ENCODE measurements at regions of chr3 and their contacts with region 1.

Region 1: GRCh38 chr3:150870396-150870795 is 34.8 kb downstream of the MINDY4B start:
- DNase-seq: no peak
- ATAC-seq: no peak
- H3K4me3 ChIP-seq: no peak overlapping the region
- H3K4me3 Mint-ChIP-seq: no peak overlapping the region
- H3K27ac ChIP-seq: no peak overlapping the region
- H3K27ac Mint-ChIP-seq: no peak overlapping the region
- H3K4me1 ChIP-seq: no peaks in the 10 kb centered on the region
- H3K4me1 Mint-ChIP-seq: peaks cover under 1% of the 10 kb centered on the region
- H3K27me3 ChIP-seq: no peaks in the 10 kb centered on the region
- H3K27me3 Mint-ChIP-seq: peaks cover 14% of the 10 kb centered on the region
- CTCF ChIP-seq: no peak

Region 2: GRCh38 chr3:150286390-150287147 is 583.8 kb before region 1 on chr3:
- CTCF ChIA-PET with region 1: no interaction called
- POLR2A ChIA-PET with region 1: no interaction called
- intact Hi-C with region 1: loop called in 1 of 2 experiments (anchors 10 kb)
- DNase-seq: peak in 4 of 9 experiments; percentile 8 to 68 (median 34)
- ATAC-seq: peak; percentile 83
- H3K4me3 ChIP-seq: no peak overlapping the region
- H3K4me3 Mint-ChIP-seq: no peak overlapping the region
- H3K27ac ChIP-seq: no peak overlapping the region
- H3K27ac Mint-ChIP-seq: no peak overlapping the region
- H3K4me1 ChIP-seq: no peaks in the 10 kb centered on the region
- H3K4me1 Mint-ChIP-seq: no peaks in the 10 kb centered on the region
- H3K27me3 ChIP-seq: peaks cover 2% of the 10 kb centered on the region in 2 experiments
- H3K27me3 Mint-ChIP-seq: peaks cover 13% of the 10 kb centered on the region
- CTCF ChIP-seq: peak; percentile 65

Region 3: GRCh38 chr3:150528354-150528797 is 342.0 kb before region 1 on chr3:
- CTCF ChIA-PET with region 1: interaction called, 3 read pairs
- POLR2A ChIA-PET with region 1: no interaction called
- intact Hi-C with region 1: loop called (anchors 1 to 2 kb)
- DNase-seq: peak in 2 of 9 experiments; percentile 45 to 50
- ATAC-seq: peak; percentile 54
- H3K4me3 ChIP-seq: no peak overlapping the region
- H3K4me3 Mint-ChIP-seq: no peak overlapping the region
- H3K27ac ChIP-seq: no peak overlapping the region
- H3K27ac Mint-ChIP-seq: no peak overlapping the region
- H3K4me1 ChIP-seq: no peaks in the 10 kb centered on the region
- H3K4me1 Mint-ChIP-seq: no peaks in the 10 kb centered on the region
- H3K27me3 ChIP-seq: no peaks in the 10 kb centered on the region
- H3K27me3 Mint-ChIP-seq: no peaks in the 10 kb centered on the region
- CTCF ChIP-seq: peak; percentile 67

Region 4: GRCh38 chr3:150603153-150603979 is 267.0 kb before region 1 on chr3 and contains the start of gene SELENOT:
- CTCF ChIA-PET with region 1: no interaction called
- POLR2A ChIA-PET with region 1: no interaction called
- intact Hi-C with region 1: loop called in 1 of 2 experiments (anchors 10 kb)
- DNase-seq: peak; percentile 88 to 98 (median 94)
- ATAC-seq: peak; percentile 81
- H3K4me3 ChIP-seq: peak within 1 kb of the TSS; percentile 79 to 86
- H3K4me3 Mint-ChIP-seq: peak within 1 kb of the TSS; percentile 99
- H3K27ac ChIP-seq: peak within 1 kb of the TSS; percentile 88 to 95
- H3K27ac Mint-ChIP-seq: peak within 1 kb of the TSS; percentile 100
- H3K4me1 ChIP-seq: peaks cover 43% of the 10 kb centered on the region
- H3K4me1 Mint-ChIP-seq: peaks cover 71% of the 10 kb centered on the region
- H3K27me3 ChIP-seq: no peaks in the 10 kb centered on the region
- H3K27me3 Mint-ChIP-seq: no peaks in the 10 kb centered on the region
- CTCF ChIP-seq: no peak
- total RNA-seq, gene SELENOT: 130 to 139 TPM

Region 5: DNA sequence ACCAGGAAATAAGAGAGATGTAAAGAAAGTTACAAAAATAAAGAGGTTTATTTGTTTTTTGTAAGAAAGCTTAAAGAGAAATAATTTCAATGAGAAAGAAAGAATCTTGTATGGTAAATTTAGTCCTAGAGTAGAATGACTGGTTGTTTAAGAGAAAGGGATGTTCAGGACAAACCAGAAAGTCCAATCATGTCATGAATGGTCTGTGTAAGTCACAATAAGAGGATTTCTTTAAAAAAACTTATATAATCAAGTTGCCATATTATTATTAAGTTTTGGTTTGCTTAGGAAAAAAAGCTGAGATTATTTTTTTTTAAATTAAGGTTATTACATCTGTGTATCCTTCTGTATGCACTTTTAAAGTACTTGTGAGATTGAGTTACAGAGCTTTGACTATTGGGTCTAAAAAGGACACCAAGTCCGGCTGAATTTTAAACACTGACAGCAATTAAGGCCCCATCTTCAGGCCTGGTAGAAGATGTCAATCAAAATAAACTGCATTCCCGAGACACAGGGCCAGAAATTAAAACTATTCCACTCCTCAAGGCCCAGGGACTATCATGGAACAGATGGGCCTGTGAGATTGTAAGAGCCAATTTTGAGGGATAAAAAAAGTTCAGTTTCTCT is 178.9 kb before region 1 on chr3:
- CTCF ChIA-PET with region 1: no interaction called
- POLR2A ChIA-PET with region 1: no interaction called
- intact Hi-C with region 1: no loop called
- DNase-seq: no peak
- ATAC-seq: no peak
- H3K4me3 ChIP-seq: no peak overlapping the region
- H3K4me3 Mint-ChIP-seq: no peak overlapping the region
- H3K27ac ChIP-seq: no peak overlapping the region
- H3K27ac Mint-ChIP-seq: no peak overlapping the region
- H3K4me1 ChIP-seq: no peaks in the 10 kb centered on the region
- H3K4me1 Mint-ChIP-seq: no peaks in the 10 kb centered on the region
- H3K27me3 ChIP-seq: no peaks in the 10 kb centered on the region
- H3K27me3 Mint-ChIP-seq: no peaks in the 10 kb centered on the region
- CTCF ChIP-seq: no peak

Region 6: GRCh38 chr3:150787741-150788370 is 82.5 kb before region 1 on chr3:
- CTCF ChIA-PET with region 1: interaction called, 6 read pairs
- POLR2A ChIA-PET with region 1: no interaction called
- intact Hi-C with region 1: loop called (anchors 1 kb)
- DNase-seq: peak; percentile 52 to 83 (median 80)
- ATAC-seq: peak; percentile 86
- H3K4me3 ChIP-seq: no peak overlapping the region
- H3K4me3 Mint-ChIP-seq: no peak overlapping the region
- H3K27ac ChIP-seq: no peak overlapping the region
- H3K27ac Mint-ChIP-seq: no peak overlapping the region
- H3K4me1 ChIP-seq: no peaks in the 10 kb centered on the region
- H3K4me1 Mint-ChIP-seq: peaks cover 3% of the 10 kb centered on the region
- H3K27me3 ChIP-seq: no peaks in the 10 kb centered on the region
- H3K27me3 Mint-ChIP-seq: peaks cover 3% of the 10 kb centered on the region
- CTCF ChIP-seq: peak; percentile 98

Region 7: DNA sequence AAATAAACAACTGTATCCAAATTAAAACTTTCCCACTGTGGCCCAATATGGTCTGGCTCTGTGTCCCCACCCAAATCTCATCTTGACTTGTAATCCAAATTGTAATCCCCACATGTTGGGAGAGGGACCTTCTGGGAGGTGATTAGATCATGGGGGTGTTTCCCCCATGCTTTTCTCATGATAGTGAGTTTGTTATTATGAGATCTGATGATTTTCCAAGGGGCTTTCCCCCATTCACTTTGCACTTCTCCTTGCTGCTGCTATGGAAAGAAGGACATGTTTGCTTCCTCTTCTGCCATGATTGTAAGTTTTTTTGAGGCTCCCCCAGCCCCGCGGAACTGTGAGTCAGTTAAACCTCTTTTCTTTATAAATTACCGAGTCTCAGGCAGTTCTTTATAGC is 20.2 kb before region 1 on chr3:
- CTCF ChIA-PET with region 1: no interaction called
- POLR2A ChIA-PET with region 1: no interaction called
- intact Hi-C with region 1: no loop called
- DNase-seq: no peak
- ATAC-seq: no peak
- H3K4me3 ChIP-seq: no peak overlapping the region
- H3K4me3 Mint-ChIP-seq: no peak overlapping the region
- H3K27ac ChIP-seq: no peak overlapping the region
- H3K27ac Mint-ChIP-seq: no peak overlapping the region
- H3K4me1 ChIP-seq: no peaks in the 10 kb centered on the region
- H3K4me1 Mint-ChIP-seq: no peaks in the 10 kb centered on the region
- H3K27me3 ChIP-seq: no peaks in the 10 kb centered on the region
- H3K27me3 Mint-ChIP-seq: peaks cover 5% of the 10 kb centered on the region
- CTCF ChIP-seq: no peak

Region 8: GRCh38 chr3:150985711-150986110 is 115.3 kb after region 1 on chr3:
- CTCF ChIA-PET with region 1: no interaction called
- POLR2A ChIA-PET with region 1: no interaction called
- intact Hi-C with region 1: no loop called
- DNase-seq: no peak
- ATAC-seq: no peak
- H3K4me3 ChIP-seq: no peak overlapping the region
- H3K4me3 Mint-ChIP-seq: no peak overlapping the region
- H3K27ac ChIP-seq: no peak overlapping the region
- H3K27ac Mint-ChIP-seq: no peak overlapping the region
- H3K4me1 ChIP-seq: no peaks in the 10 kb centered on the region
- H3K4me1 Mint-ChIP-seq: no peaks in the 10 kb centered on the region
- H3K27me3 ChIP-seq: no peaks in the 10 kb centered on the region
- H3K27me3 Mint-ChIP-seq: peaks cover 2% of the 10 kb centered on the region
- CTCF ChIP-seq: no peak

Region 9: DNA sequence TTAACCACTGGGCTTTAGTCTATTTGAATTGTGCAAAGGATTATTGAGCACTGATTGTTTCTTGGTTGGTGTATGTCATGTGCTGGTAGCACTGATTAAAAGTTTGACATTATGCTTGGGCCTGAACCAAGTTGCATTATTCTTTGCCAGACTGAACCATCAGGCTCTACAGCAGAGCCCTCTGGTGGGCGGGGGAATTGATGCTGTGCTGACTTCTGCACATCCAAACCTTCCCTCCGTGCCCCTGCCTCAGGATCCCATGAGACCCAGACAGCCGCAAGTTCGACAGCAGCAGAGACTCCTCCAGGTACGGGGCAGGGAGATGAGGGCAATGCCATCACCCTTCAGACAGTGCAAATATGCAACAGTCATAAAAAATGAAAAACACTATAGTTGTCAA is 542.6 kb after region 1 on chr3:
- CTCF ChIA-PET with region 1: no interaction called
- POLR2A ChIA-PET with region 1: no interaction called
- intact Hi-C with region 1: no loop called
- DNase-seq: no peak
- ATAC-seq: no peak
- H3K4me3 ChIP-seq: no peak overlapping the region
- H3K4me3 Mint-ChIP-seq: no peak overlapping the region
- H3K27ac ChIP-seq: no peak overlapping the region
- H3K27ac Mint-ChIP-seq: no peak overlapping the region
- H3K4me1 ChIP-seq: no peaks in the 10 kb centered on the region
- H3K4me1 Mint-ChIP-seq: no peaks in the 10 kb centered on the region
- H3K27me3 ChIP-seq: no peaks in the 10 kb centered on the region
- H3K27me3 Mint-ChIP-seq: no peaks in the 10 kb centered on the region
- CTCF ChIP-seq: no peak